ENCODE measurements at regions of chr1 and their contacts with region 1.

Region 1: GRCh38 chr1:183915625-183916510 is 110.9 kb downstream of the RGL1 start:
- DNase-seq: peak; percentile 86
- H3K4me3 Mint-ChIP-seq: no peak overlapping the region
- H3K27ac Mint-ChIP-seq: peak overlapping the region; percentile 6
- H3K4me1 Mint-ChIP-seq: peaks cover 20% of the 10 kb centered on the region
- H3K27me3 Mint-ChIP-seq: no peaks in the 10 kb centered on the region

Region 2: DNA sequence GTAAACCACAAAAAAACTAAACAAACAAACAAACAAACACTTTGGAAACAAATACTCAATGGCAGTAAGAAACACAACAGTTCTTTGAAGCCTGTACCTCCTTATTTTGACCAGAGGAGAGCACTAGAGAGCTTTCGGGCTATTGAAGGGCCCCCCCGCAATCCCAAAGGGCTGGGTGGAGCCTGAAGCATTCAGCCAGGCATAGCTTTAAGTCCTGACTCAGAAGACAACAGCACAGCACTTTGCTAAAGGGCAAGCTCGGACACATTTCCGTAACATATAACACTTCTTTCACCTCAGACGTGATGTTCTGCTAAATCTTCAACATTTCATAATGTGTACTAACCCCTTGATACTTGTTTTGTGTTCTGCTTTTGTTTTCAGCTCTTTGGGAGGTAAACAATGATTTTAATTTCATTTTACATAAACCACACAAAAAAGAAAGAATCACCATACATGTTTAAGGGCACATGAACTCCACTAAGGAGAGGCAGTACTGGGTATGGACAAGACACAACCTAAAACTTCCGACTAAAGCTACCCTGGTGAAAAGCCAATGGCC is 953.2 kb before region 1 on chr1:
- CTCF ChIA-PET with region 1: no interaction called
- intact Hi-C with region 1: loop called (anchors 5 kb)
- DNase-seq: peak; percentile 64
- H3K4me3 Mint-ChIP-seq: no peak overlapping the region
- H3K27ac Mint-ChIP-seq: no peak overlapping the region
- H3K4me1 Mint-ChIP-seq: peaks cover 4% of the 10 kb centered on the region
- H3K27me3 Mint-ChIP-seq: peaks cover 10% of the 10 kb centered on the region

Region 3: DNA sequence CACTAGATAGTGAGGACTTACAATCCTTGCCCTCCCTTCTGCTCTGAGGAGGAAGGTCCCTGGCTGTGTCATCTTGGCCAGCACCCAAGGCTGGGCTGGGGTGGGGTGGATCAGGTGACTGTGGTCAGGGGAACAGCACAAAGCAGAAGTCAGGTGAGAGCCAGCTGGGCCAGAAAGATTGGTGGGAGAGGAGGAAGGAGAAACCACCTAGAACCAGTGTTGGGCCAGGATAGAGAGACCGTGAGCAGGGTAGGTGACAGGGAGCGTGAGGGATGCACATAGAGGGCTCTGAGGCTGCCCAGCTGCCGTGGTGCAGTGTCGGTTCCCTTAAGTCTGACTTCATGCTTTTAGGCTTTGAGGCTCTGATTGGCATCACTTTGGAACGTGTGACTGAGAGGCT is 348.3 kb before region 1 on chr1:
- CTCF ChIA-PET with region 1: no interaction called
- intact Hi-C with region 1: loop called (anchors 10 kb)
- DNase-seq: peak; percentile 38
- H3K4me3 Mint-ChIP-seq: no peak overlapping the region
- H3K27ac Mint-ChIP-seq: no peak overlapping the region
- H3K4me1 Mint-ChIP-seq: peaks cover 19% of the 10 kb centered on the region
- H3K27me3 Mint-ChIP-seq: peaks cover 12% of the 10 kb centered on the region

Region 4: GRCh38 chr1:183739741-183740271 is 176.1 kb before region 1 on chr1:
- CTCF ChIA-PET with region 1: no interaction called
- intact Hi-C with region 1: loop called (anchors 1 kb)
- DNase-seq: no peak
- H3K4me3 Mint-ChIP-seq: no peak overlapping the region
- H3K27ac Mint-ChIP-seq: no peak overlapping the region
- H3K4me1 Mint-ChIP-seq: peaks cover 2% of the 10 kb centered on the region
- H3K27me3 Mint-ChIP-seq: no peaks in the 10 kb centered on the region

Region 5: GRCh38 chr1:183896466-183897048 is 19.3 kb before region 1 on chr1:
- CTCF ChIA-PET with region 1: interaction called, 14 read pairs
- intact Hi-C with region 1: loop called (anchors 1 kb)
- DNase-seq: no peak
- H3K4me3 Mint-ChIP-seq: no peak overlapping the region
- H3K27ac Mint-ChIP-seq: no peak overlapping the region
- H3K4me1 Mint-ChIP-seq: peaks cover 13% of the 10 kb centered on the region
- H3K27me3 Mint-ChIP-seq: no peaks in the 10 kb centered on the region

Region 6: DNA sequence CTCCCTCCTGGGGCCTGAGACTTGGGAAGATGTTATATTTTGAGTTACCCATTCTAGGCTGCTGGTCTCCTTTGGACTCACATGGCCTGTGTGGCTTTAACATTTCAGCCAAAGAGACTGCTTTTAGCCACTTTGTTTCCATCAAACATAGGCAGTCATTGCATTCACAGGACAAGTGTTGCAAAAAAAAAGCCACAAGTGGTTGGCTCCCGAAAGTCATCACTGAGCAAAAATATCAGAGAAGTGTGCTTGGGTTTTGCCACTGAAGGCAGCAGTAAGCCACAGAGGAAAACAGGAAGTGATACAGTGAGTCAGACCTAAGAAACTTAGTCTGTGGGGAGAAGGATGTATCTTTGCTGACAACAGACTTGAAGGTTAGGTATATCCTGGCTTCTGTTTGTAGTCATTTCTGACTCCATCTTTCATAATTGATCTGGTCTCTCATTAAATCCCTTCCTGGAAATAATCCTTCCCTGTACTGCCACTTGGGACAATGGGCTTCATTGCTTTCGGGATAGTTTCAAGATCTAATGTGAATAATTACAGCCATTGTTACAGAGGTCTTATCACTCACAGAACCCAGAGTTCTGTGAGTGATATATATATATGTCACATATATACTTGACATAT is 40.8 kb after region 1 on chr1:
- CTCF ChIA-PET with region 1: interaction called, 5 read pairs
- intact Hi-C with region 1: loop called (anchors 1 kb)
- DNase-seq: peak; percentile 71
- H3K4me3 Mint-ChIP-seq: no peak overlapping the region
- H3K27ac Mint-ChIP-seq: peak overlapping the region; percentile 86
- H3K4me1 Mint-ChIP-seq: no peaks in the 10 kb centered on the region
- H3K27me3 Mint-ChIP-seq: no peaks in the 10 kb centered on the region

Region 7: DNA sequence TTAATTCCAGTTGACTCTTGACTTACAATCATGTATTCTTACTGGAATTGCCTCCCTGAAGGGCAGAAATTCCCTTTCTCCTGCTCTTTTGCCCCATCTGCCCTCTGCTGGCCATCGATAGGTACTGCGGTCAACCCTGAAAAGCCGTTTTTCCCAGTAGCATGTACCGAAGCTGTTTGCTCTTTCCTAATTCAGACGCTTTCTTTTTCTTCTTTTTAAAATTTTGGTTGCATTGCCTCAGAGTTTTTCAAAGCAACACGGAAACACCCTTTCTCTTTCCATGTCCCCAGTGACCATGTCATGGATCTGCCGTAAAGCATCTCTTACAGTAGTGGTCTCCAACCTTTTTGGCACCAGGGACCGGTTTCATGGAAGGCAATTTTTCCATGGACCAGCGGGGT is 306.8 kb after region 1 on chr1:
- CTCF ChIA-PET with region 1: interaction called, 5 read pairs
- intact Hi-C with region 1: loop called (anchors 1 kb)
- DNase-seq: peak; percentile 59
- H3K4me3 Mint-ChIP-seq: no peak overlapping the region
- H3K27ac Mint-ChIP-seq: no peak overlapping the region
- H3K4me1 Mint-ChIP-seq: no peaks in the 10 kb centered on the region
- H3K27me3 Mint-ChIP-seq: peaks cover 2% of the 10 kb centered on the region